Left lung (tissue), 14 donors: ENCODE measurements at regions of chr7 and their contacts with region 1.

Region 1: DNA sequence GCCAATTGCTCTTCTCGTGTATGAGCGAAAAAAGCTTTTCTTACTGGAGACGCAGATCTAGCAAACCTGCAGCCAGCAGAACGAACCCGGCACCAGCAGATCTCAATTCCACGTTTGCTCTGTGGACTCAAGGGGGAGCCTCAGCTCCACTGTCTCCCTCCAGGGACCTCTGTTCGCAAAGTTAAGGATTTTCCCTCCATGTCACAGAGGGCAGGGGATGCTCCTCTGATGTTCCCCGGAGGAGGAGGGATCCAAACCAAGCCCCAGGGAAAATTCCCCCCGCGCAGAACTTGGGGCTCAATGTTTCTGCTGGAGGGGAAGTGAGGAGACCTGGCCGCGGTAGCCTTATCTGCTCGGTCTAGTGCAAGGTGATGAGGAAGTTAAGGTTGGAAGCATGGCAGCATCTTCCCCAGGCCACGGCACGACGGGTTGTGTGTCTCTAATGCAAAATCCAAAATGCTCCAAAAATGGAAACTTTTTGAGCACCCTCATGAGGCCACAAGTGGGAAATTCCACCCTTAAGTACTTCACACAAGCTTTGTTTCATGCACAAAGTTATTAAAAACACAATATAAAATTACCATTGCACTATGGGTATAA is 9.0 kb downstream of the IQCE start:
- DNase-seq: peak in 2 of 4 donors; percentile 60 to 63
- ATAC-seq: peak; percentile 74
- H3K4me3 ChIP-seq: no peak overlapping the region
- H3K27ac ChIP-seq: no peak overlapping the region
- H3K4me1 ChIP-seq: peaks cover 5 to 15% of the 10 kb centered on the region in 2 donors
- H3K27me3 ChIP-seq: no peaks in the 10 kb centered on the region
- CTCF ChIP-seq: peak; percentile 23 to 25

Region 2: DNA sequence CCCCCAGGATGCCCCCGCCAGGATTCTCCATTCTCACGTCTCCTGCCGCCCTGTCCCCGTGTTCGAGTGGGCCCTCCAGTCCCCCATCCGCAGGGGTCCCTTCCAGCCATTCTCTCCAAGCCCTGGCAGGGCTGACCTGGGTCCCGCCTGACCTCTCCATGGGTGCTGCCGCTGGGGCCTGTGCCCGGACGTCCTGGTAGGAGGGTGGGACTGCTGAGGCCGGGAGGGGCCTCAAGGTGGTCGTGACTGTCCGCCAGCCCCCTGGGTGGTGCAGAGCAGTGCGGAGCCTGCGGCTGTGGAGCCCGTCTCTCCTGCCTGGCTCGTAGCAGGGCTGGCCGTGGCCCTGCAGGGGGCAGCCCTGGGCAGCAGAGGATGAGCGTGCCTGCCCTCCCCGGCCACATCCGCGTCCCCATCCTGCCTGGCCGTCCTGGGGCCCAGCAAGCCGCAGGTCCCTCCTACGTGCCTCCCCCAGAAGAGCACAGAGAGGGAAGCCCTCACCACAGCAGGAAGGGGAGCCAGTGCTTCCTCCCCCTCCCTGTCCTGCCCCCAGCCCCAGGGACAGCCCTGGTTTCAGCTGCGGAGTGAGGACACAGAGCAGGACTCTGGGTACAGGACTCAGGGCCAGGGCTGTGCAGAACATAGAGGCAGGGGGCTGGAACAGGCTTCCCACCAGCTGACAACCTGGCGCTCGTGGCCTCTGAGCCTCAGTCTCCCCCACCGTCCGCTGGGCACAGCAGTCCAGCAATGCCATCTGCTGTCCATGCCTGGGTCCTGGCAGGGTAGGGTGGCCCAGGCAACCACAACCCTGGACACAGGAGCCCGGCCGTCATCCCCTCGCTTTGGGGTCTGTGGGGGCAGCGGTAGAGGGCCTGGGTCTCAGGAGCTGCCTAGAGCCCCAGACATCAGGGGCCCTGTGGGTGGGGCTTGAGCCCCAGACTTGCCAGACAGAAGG is 90.1 kb before region 1 on chr7:
- intact Hi-C with region 1: loop called in 1 of 2 experiments (anchors 10 kb)
- DNase-seq: peak in 3 of 4 donors; percentile 61 to 93 (median 63)
- ATAC-seq: peak; percentile 92
- H3K4me3 ChIP-seq: no peak overlapping the region
- H3K27ac ChIP-seq: no peak overlapping the region
- H3K4me1 ChIP-seq: peaks cover 11 to 21% of the 10 kb centered on the region in 2 donors
- H3K27me3 ChIP-seq: peaks cover 0 to 31% of the 10 kb centered on the region in 2 donors
- CTCF ChIP-seq: peak; percentile 57 to 90

Region 3: GRCh38 chr7:2660585-2661408 is 93.0 kb after region 1 on chr7:
- intact Hi-C with region 1: no loop called
- DNase-seq: no peak
- ATAC-seq: no peak
- H3K4me3 ChIP-seq: no peak overlapping the region
- H3K27ac ChIP-seq: no peak overlapping the region
- H3K4me1 ChIP-seq: peaks cover 4 to 19% of the 10 kb centered on the region in 2 donors
- H3K27me3 ChIP-seq: peaks cover 0 to 8% of the 10 kb centered on the region in 2 donors
- CTCF ChIP-seq: no peak

Region 4: DNA sequence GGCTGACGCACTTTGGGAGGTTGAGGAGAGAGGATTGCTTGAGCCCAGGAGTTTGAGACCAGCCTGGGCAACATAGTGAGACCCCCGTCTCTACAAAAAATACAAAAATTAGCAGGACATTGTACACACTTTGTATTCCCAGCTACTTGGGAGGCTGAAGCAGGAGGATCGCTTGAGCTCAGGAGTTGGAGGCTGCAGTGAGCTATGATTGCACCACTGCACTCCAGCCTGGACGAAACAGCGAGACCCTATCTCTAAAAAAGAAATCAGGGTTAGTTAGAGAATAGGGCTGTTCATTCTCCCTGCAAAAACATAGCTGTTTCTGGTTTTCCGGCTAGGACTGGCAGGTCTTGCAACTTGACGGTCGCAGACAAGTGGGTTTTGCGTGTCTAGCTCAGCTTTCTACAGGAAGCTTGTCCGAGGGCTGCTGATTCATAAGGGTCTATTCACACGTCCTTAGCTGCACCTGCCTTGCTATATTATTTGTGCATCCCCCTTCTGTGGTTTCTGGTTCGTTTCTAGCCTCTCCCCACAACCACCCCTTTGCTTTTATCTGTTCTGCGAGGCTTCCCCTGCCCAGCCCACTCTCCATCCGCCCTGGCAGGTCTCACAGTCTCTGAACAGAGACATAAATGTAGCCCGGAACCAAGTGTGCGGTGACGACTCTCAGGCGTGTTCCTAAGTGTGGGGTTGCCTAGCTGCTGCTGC is 131.0 kb after region 1 on chr7:
- intact Hi-C with region 1: no loop called
- DNase-seq: no peak
- ATAC-seq: no peak
- H3K4me3 ChIP-seq: no peak overlapping the region
- H3K27ac ChIP-seq: no peak overlapping the region
- H3K4me1 ChIP-seq: no peaks in the 10 kb centered on the region
- H3K27me3 ChIP-seq: peaks cover 0 to 26% of the 10 kb centered on the region in 2 donors
- CTCF ChIP-seq: no peak